ENCODE measurements at regions of chr15 and their contacts with region 1.

Region 1: DNA sequence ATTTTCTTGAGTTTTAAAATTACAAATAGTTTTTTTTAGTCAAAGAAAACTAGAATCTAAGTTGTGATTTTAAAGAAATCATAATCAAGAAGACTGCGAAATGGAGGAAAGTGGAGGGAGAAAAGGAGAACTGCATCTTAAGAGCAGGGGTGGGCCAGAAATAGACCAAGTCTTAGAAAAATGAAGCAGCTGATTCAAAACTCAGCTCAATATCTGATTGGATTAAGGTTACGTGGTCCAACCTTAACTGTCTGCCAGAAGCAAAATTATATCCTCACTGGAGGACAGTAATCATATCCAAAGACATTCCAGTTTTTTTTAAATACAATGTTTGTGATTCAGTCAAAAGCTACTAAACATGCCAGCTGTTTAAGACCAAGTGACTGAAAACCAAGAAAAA is 41.4 kb downstream of the CHSY1 start:
- DNase-seq: no peak
- ATAC-seq: no peak
- H3K4me3 Mint-ChIP-seq: no peak overlapping the region
- H3K27ac Mint-ChIP-seq: no peak overlapping the region
- H3K4me1 Mint-ChIP-seq: peaks cover 46% of the 10 kb centered on the region
- H3K27me3 Mint-ChIP-seq: no peaks in the 10 kb centered on the region
- CTCF ChIP-seq: no peak

Region 2: GRCh38 chr15:101221902-101222301 is 11.4 kb after region 1 on chr15:
- CTCF ChIA-PET with region 1: no interaction called
- POLR2A ChIA-PET with region 1: no interaction called
- intact Hi-C with region 1: no loop called
- DNase-seq: no peak
- ATAC-seq: no peak
- H3K4me3 Mint-ChIP-seq: no peak overlapping the region
- H3K27ac Mint-ChIP-seq: no peak overlapping the region
- H3K4me1 Mint-ChIP-seq: peaks cover 15% of the 10 kb centered on the region
- H3K27me3 Mint-ChIP-seq: no peaks in the 10 kb centered on the region
- CTCF ChIP-seq: no peak

Region 3: DNA sequence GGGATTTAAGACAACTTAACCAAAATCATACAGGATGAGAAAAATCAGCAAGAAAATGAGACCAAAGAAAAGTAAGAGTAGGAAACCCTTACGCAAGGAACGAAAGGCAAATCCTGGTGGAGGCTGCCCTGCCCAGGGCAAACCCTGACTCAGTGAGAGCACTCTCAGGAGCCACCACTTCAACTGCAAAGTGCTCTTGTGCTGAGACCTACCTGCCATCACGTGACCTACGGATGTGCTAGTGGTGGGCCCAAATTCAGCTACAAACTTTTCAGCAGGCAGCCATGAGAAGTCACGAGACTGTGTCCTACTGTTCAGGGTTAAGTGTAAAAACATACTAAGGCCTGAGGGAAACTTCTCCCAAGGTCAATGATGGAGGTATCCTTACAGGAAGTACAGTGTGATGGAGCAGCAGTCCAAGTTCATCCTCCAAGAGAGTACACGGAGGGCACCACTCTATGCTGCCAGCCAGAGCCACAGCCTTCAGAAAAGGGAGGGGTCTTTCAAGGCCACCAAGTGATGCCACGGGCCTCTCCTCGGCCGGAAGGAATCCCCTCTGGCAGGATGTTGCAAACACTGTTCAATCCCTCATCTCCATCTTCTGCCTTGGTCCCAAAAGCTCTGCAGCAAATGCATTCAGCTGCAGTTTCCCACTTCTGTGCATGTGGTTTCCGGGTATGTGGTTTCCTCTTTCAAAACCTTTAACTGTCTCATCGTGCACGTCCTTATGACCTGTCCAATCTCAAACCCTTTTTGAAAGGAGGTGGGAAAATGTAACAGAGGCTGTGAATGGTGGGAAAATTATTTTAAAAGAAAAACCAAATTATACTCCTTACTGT is 31.9 kb after region 1 on chr15:
- CTCF ChIA-PET with region 1: no interaction called
- POLR2A ChIA-PET with region 1: no interaction called
- intact Hi-C with region 1: loop called (anchors 2 kb)
- DNase-seq: peak; percentile 24
- ATAC-seq: peak; percentile 85
- H3K4me3 Mint-ChIP-seq: peak overlapping the region; percentile 46
- H3K27ac Mint-ChIP-seq: peak overlapping the region; percentile 65
- H3K4me1 Mint-ChIP-seq: peaks cover 80% of the 10 kb centered on the region
- H3K27me3 Mint-ChIP-seq: no peaks in the 10 kb centered on the region
- CTCF ChIP-seq: no peak

Measured in activated B cell treated with CpG ODN at 0.5 μM for 24 hours (primary cell).